ENCODE measurements at regions of chr1 and their contacts with region 1.

Region 1: DNA sequence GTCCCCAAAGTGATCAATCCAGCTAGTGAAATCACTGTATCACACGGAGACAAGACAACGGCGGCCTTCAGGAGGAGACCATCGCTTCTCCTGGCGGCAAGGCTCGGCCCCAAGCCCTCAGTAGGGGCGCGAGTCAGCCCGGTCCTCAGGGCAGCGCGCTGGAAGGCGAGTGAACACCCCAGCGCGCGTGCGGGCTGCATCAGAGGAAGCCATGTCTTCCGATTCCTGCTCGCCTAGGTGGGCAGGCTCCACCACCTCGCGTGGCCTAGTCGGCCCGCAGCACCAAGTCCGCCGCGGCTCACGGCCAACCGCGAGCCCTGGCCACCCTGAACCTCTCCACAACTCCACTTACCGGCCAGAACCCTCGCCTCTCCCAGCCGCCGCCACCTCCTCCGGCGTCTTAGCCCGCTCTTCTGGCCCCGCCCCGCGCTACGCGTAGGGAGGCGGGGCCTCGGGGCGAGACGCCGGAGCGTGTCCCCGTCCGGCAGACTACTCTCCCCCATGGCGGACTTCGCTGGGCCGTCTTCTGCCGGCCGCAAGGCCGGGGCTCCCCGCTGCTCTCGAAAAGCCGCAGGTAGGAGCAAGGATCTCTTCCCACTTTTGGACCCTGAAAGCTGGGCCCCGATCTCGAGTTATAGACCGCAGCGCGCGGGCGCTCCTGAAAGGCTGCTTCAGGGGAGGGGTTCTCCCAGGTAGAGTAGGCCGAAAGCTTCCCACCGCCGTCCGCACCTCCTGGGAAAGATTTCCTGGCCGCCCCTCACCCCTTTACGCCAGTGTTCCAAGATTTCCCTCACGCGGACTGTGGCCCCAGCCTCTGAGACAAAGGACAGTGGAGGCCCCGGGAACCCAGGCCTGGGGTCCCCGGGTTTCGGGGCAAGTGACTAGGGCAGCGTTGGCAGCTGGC is at the starts of genes GLMN and RPAP2:
- DNase-seq: peak; percentile 73 to 78
- H3K4me3 ChIP-seq: peak within 1 kb of the TSS; percentile 86
- H3K27ac ChIP-seq: peak within 1 kb of the TSS; percentile 66
- H3K4me1 ChIP-seq: peaks cover 24% of the 10 kb centered on the region
- H3K27me3 ChIP-seq: no peaks in the 10 kb centered on the region
- CTCF ChIP-seq: no peak; the same call in none of the 2 replicates
- total RNA-seq, gene GLMN: 7.4 and 8.0 TPM in 2 replicates
- total RNA-seq, gene RPAP2: 14.0 and 20.3 TPM in 2 replicates

Region 2: GRCh38 chr1:91490501-91490900 is 808.3 kb before region 1 on chr1:
- CTCF ChIA-PET with region 1: no interaction called
- POLR2A ChIA-PET with region 1: no interaction called
- intact Hi-C with region 1: no loop called
- DNase-seq: no peak
- H3K4me3 ChIP-seq: no peak overlapping the region
- H3K27ac ChIP-seq: no peak overlapping the region
- H3K4me1 ChIP-seq: no peaks in the 10 kb centered on the region
- H3K27me3 ChIP-seq: no peaks in the 10 kb centered on the region
- CTCF ChIP-seq: no peak

Region 3: DNA sequence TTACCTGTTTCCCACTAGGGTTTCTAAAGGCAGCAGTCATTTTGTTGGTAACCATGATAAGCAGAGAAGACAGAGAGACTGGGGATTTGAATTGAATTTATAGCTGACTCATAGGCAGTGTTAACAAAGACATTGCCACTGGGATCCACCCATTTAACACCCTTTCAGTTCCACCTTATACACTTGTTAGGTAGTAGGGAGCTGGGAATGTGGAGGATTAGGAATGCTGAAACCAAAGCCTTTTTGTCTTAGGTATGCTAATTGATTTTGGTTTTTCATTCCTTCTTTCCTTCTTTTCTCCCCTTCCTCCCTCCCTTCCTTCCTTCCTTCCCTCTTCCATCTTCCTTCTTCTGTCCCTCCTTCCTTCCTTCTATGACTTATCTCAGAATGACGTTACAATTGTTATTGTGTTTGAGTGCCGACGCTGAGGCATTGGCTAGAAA is 493.5 kb after region 1 on chr1:
- CTCF ChIA-PET with region 1: interaction called, 10 read pairs
- POLR2A ChIA-PET with region 1: no interaction called
- intact Hi-C with region 1: no loop called
- DNase-seq: no peak
- H3K4me3 ChIP-seq: no peak overlapping the region
- H3K27ac ChIP-seq: no peak overlapping the region
- H3K4me1 ChIP-seq: peaks cover 10% of the 10 kb centered on the region; the same call in 1 of the 2 replicates
- H3K27me3 ChIP-seq: no peaks in the 10 kb centered on the region
- CTCF ChIP-seq: no peak

Measured in PC-9 (cell line).